ENCODE measurements at regions of chr6 and their contacts with region 1.

Region 1: GRCh38 chr6:119331663-119332286 is 17.8 kb downstream of the MAN1A1 start:
- DNase-seq: no peak
- H3K4me3 ChIP-seq: no peak overlapping the region
- H3K27ac ChIP-seq: no peak overlapping the region
- H3K4me1 ChIP-seq: no peaks in the 10 kb centered on the region
- H3K27me3 ChIP-seq: no peaks in the 10 kb centered on the region
- CTCF ChIP-seq: no peak
- POLR2A ChIP-seq: no peak

Region 2: DNA sequence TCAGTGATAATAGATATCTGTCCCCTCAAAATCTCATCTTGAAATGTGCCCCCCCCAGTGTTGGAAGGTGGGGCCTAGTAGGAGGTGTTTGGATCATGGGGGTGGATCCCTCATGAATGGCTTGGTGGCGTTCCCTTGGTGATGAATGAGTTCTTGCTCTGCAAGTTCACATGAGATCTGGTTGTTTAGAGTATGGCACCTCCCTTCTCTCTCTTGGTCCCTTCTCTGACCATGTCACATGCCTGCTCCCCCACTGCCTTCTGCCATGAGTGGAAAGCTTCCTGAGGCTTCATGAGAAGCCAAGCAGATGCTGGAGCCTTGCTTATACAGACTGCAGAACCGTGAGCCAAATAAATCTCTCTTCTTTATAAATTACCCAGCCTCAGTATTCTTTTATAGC is 53.2 kb before region 1 on chr6:
- intact Hi-C with region 1: loop called (anchors 2 kb)
- DNase-seq: no peak
- H3K4me3 ChIP-seq: no peak overlapping the region
- H3K27ac ChIP-seq: no peak overlapping the region
- H3K4me1 ChIP-seq: no peaks in the 10 kb centered on the region
- H3K27me3 ChIP-seq: no peaks in the 10 kb centered on the region
- CTCF ChIP-seq: no peak
- POLR2A ChIP-seq: no peak

Region 3: DNA sequence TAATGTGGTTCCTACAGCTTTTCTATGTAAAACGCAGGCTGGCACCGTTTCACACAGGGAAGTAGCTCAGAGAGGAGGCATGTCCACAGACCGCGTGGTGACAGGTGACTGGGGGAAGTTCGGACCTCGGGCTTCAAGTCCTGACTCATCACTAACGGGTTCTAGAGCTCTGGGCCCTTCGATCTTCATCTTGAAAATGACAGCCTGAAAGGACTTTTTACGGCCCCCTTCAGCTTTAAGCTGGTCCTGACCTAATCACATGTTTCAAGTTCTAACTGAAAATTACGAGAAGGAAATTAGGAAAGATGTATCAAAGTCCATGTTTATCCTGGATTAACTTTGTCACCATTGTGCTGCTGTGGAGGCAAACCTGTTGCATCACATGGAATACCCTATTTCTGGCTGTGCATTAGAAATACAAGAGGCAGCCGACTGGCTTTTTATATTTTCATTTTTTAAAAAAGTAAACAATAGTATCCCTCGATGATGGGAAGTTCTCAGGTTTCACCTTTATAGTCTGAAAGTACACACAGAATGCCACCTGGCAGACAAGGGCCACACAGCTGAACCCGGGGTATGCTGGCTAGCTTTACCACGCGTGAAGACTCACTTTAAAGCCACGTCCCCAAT is 15.8 kb after region 1 on chr6:
- intact Hi-C with region 1: no loop called
- DNase-seq: no peak
- H3K4me3 ChIP-seq: peak overlapping the region; percentile 84 to 97 (median 92)
- H3K27ac ChIP-seq: peak overlapping the region; percentile 95 to 97
- H3K4me1 ChIP-seq: no peaks in the 10 kb centered on the region
- H3K27me3 ChIP-seq: no peaks in the 10 kb centered on the region
- CTCF ChIP-seq: no peak
- POLR2A ChIP-seq: no peak